ENCODE measurements at regions of chr3 and their contacts with region 1.

Region 1: DNA sequence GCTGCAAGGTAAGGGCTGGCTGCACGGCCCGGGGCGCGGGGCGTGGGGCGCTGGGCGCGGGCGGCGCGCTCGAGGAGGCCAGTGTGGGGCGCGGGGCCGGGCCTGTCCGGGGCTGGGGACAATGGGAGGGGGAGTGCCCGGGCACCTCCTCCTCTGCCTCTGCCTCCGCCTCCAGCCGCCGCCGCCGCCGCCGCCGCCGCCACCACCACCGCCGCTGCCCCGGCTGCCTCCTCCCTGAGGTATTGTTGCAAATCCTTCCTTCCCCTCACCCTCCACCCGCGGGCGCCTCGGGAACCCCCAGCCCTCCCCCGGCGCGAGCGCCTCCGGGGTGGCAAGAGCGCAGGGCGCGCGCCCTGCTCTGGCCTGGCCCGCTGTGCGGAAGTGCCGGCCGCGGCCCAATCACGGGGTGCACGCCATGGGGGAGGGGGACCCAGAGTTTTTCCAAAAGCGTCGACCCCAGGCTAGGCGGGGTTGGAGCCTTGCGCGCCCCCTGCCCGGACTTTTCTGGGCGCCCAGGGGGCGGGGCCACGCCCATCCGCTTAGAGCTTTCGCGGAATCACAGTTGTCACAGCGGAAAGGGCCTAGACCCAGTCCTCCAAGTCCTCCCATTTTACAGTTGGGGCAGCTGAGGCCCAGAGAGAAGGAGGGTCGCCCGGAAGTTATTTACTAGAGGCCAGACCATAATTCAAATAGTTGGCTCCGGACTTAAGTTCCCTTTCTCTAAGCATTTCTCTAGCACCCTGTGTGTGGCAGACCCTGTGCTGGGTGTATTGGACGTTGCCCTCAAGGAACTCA is at the start of gene LPP:
- DNase-seq: peak; percentile 45
- H3K4me3 ChIP-seq: peak within 1 kb of the TSS; percentile 91 to 94 (median 92)
- H3K27ac ChIP-seq: peak within 1 kb of the TSS; percentile 91
- H3K4me1 ChIP-seq: peaks cover 20% of the 10 kb centered on the region
- H3K27me3 ChIP-seq: no peaks in the 10 kb centered on the region
- CTCF ChIP-seq: no peak
- POLR2A ChIP-seq: peak; percentile 15
- total RNA-seq, gene LPP: 136 and 153 TPM in 2 replicates

Region 2: DNA sequence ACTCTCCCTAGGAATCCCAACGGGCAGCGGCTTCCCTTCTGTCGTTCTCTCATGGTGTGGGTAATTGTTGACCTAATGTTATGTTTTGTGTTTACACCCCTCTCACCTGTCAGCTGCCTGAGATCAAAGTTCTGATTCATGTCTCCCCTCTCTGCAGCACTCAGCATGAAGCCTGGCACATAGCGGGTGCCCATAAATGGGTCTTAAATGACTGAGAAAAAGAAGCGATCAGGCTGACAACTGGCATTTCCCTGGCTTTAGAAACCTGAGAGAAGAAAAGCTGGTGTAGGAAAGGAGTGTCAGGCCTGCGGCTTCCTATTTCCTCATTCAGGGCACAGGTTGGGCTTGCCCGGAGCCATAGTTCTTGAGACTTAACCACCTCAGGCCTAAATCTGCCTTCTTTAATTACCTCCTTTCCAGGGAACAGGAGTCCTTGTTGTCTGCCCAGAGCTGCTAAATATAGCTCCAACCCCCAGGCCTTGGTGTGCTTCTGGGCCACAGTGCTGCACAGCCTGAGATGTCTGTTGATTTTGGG is 31.6 kb after region 1 on chr3:
- CTCF ChIA-PET with region 1: no interaction called
- POLR2A ChIA-PET with region 1: no interaction called
- dilution Hi-C with region 1: no loop called
- intact Hi-C with region 1: loop called (anchors 2 kb)
- DNase-seq: no peak
- H3K4me3 ChIP-seq: no peak overlapping the region
- H3K27ac ChIP-seq: no peak overlapping the region
- H3K4me1 ChIP-seq: peaks cover 23% of the 10 kb centered on the region
- H3K27me3 ChIP-seq: no peaks in the 10 kb centered on the region
- CTCF ChIP-seq: no peak
- POLR2A ChIP-seq: no peak

Region 3: DNA sequence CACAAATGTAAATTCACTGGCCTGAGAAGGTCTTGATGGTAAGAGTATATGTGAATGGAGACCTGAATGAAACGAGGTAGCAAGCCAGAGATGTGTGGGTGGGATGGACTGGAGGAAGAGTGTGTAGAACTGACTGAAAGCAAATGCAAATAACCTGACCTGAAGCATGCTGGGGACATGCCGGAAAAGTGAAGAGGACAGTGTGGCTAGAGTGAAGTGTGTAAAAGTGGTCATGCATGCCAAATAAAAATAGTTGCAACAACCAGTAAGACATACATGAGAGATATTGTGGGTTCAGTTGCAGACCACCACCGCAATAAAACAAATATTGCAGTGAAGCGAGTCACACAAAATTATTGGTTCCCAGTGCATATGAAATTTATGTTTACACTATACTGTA is 82.1 kb after region 1 on chr3:
- CTCF ChIA-PET with region 1: no interaction called
- POLR2A ChIA-PET with region 1: no interaction called
- dilution Hi-C with region 1: no loop called
- intact Hi-C with region 1: no loop called
- DNase-seq: no peak
- H3K4me3 ChIP-seq: no peak overlapping the region
- H3K27ac ChIP-seq: no peak overlapping the region
- H3K4me1 ChIP-seq: no peaks in the 10 kb centered on the region
- H3K27me3 ChIP-seq: no peaks in the 10 kb centered on the region
- CTCF ChIP-seq: no peak
- POLR2A ChIP-seq: no peak

Region 4: GRCh38 chr3:188262913-188263683 is 108.9 kb after region 1 on chr3:
- CTCF ChIA-PET with region 1: interaction called, 3 read pairs
- POLR2A ChIA-PET with region 1: interaction called, 3 read pairs
- dilution Hi-C with region 1: no loop called
- intact Hi-C with region 1: loop called (anchors 1 kb)
- DNase-seq: peak; percentile 97
- H3K4me3 ChIP-seq: no peak overlapping the region
- H3K27ac ChIP-seq: peak overlapping the region; percentile 88
- H3K4me1 ChIP-seq: peaks cover 79% of the 10 kb centered on the region
- H3K27me3 ChIP-seq: no peaks in the 10 kb centered on the region
- CTCF ChIP-seq: no peak
- POLR2A ChIP-seq: peak; percentile 65

Region 5: GRCh38 chr3:188348435-188349244 is 194.4 kb after region 1 on chr3:
- CTCF ChIA-PET with region 1: no interaction called
- POLR2A ChIA-PET with region 1: no interaction called
- dilution Hi-C with region 1: no loop called
- intact Hi-C with region 1: loop called (anchors 1 kb)
- DNase-seq: peak; percentile 88
- H3K4me3 ChIP-seq: no peak overlapping the region
- H3K27ac ChIP-seq: peak overlapping the region; percentile 62
- H3K4me1 ChIP-seq: peaks cover 28% of the 10 kb centered on the region
- H3K27me3 ChIP-seq: no peaks in the 10 kb centered on the region
- CTCF ChIP-seq: no peak
- POLR2A ChIP-seq: no peak

Region 6: DNA sequence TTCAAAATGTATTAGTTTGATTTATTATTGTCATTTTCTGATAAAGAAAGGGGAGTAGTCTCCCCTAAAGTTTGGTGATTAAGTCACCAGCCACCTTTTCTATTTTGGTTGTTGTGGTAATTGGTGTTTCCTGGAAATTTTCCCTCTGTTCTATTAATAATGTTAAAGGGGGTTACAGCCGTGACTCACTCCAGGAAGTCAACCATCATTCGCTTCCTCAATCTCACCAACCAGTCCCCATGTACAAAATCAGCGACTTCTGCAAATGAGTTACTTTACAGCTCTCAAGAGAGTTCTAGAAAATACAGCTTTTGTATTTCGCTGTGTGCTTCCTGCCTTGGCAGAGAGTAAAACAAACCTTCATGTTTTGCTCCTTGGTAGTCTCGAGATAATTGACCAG is 284.9 kb after region 1 on chr3:
- CTCF ChIA-PET with region 1: no interaction called
- POLR2A ChIA-PET with region 1: no interaction called
- dilution Hi-C with region 1: no loop called
- intact Hi-C with region 1: loop called (anchors 5 kb)
- DNase-seq: peak; percentile 85
- H3K4me3 ChIP-seq: no peak overlapping the region
- H3K27ac ChIP-seq: peak overlapping the region; percentile 86
- H3K4me1 ChIP-seq: peaks cover 36% of the 10 kb centered on the region
- H3K27me3 ChIP-seq: no peaks in the 10 kb centered on the region
- CTCF ChIP-seq: no peak
- POLR2A ChIP-seq: no peak

Region 7: GRCh38 chr3:188584162-188584529 is 429.9 kb after region 1 on chr3:
- CTCF ChIA-PET with region 1: no interaction called
- POLR2A ChIA-PET with region 1: no interaction called
- dilution Hi-C with region 1: no loop called
- intact Hi-C with region 1: loop called (anchors 1 kb)
- DNase-seq: peak; percentile 78
- H3K4me3 ChIP-seq: peak overlapping the region in 2 of 3 experiments; percentile 15 to 41
- H3K27ac ChIP-seq: peak overlapping the region; percentile 79
- H3K4me1 ChIP-seq: peaks cover 20% of the 10 kb centered on the region
- H3K27me3 ChIP-seq: no peaks in the 10 kb centered on the region
- CTCF ChIP-seq: no peak
- POLR2A ChIP-seq: no peak

Region 8: GRCh38 chr3:188881954-188882641 is 727.9 kb after region 1 on chr3:
- CTCF ChIA-PET with region 1: no interaction called
- POLR2A ChIA-PET with region 1: no interaction called
- dilution Hi-C with region 1: no loop called
- intact Hi-C with region 1: loop called (anchors 5 kb)
- DNase-seq: peak; percentile 70
- H3K4me3 ChIP-seq: no peak overlapping the region
- H3K27ac ChIP-seq: peak overlapping the region; percentile 74
- H3K4me1 ChIP-seq: peaks cover 37% of the 10 kb centered on the region
- H3K27me3 ChIP-seq: no peaks in the 10 kb centered on the region
- CTCF ChIP-seq: no peak
- POLR2A ChIP-seq: no peak

Measured in endothelial cell of umbilical vein (primary cell).